ENCODE measurements at regions of chr5 and their contacts with region 1.

Region 1: GRCh38 chr5:98106116-98107031 is 667.1 kb upstream of the RGMB start:
- DNase-seq: no peak
- H3K4me3 ChIP-seq: no peak overlapping the region
- H3K27ac ChIP-seq: no peak overlapping the region
- H3K4me1 ChIP-seq: no peaks in the 10 kb centered on the region
- H3K27me3 ChIP-seq: no peaks in the 10 kb centered on the region
- CTCF ChIP-seq: no peak
- POLR2A ChIP-seq: no peak

Region 2: GRCh38 chr5:98050583-98050982 is 55.8 kb before region 1 on chr5:
- intact Hi-C with region 1: loop called (anchors 2 kb)
- DNase-seq: no peak
- H3K4me3 ChIP-seq: no peak overlapping the region
- H3K27ac ChIP-seq: no peak overlapping the region
- H3K4me1 ChIP-seq: no peaks in the 10 kb centered on the region
- H3K27me3 ChIP-seq: no peaks in the 10 kb centered on the region
- CTCF ChIP-seq: no peak
- POLR2A ChIP-seq: no peak